CD8-positive, alpha-beta T cell (primary cell): ENCODE measurements at regions of chr3 and their contacts with region 1.

Region 1: DNA sequence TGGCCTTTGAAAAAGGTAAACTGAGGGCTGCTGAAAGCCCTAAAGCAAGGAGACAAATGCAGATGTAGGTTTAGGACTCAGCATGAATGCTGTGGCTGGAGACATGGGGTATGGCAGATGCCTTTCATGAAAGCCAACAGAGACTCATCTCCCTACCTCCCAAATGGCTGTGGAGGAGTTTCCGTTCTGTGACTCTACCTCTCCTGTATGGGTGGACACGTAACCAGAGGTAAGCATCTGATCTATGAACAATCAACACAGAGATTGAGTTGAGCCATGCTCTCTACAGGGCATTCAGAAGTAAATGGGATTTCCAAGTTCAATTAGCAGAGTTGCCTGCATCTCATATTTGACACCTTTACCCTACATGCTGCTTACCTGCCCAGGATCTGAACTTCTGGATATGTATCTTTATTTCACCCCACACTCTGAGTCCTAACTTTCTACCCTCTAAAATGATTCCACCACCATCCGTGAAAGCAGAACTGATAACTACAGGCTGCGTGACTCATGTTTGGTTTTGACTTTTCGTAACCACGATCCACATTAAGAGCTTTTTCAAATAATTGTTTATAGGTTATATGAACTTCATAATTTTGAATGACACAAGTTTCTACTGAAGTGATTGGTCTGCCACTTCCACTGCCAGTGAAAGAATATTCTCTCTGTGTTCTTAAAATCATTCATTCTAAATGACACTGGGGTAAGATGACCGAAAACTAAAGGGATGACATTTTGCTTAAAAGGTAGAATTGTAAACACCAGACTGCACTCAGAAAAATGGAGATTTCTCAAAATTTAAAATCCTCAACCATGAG is 1058.7 kb downstream of the FHIT start:
- DNase-seq: no peak
- ATAC-seq: no peak
- H3K4me3 ChIP-seq: no peak overlapping the region
- H3K4me3 Mint-ChIP-seq: no peak overlapping the region
- H3K27ac ChIP-seq: no peak overlapping the region
- H3K27ac Mint-ChIP-seq: no peak overlapping the region
- H3K4me1 ChIP-seq: no peaks in the 10 kb centered on the region
- H3K4me1 Mint-ChIP-seq: peaks cover 9% of the 10 kb centered on the region
- H3K27me3 ChIP-seq: no peaks in the 10 kb centered on the region
- H3K27me3 Mint-ChIP-seq: no peaks in the 10 kb centered on the region
- CTCF ChIP-seq: no peak

Region 2: GRCh38 chr3:60114191-60114590 is 78.3 kb before region 1 on chr3:
- CTCF ChIA-PET with region 1: no interaction called
- POLR2A ChIA-PET with region 1: no interaction called
- intact Hi-C with region 1: loop called in 1 of 2 experiments (anchors 10 kb)
- DNase-seq: no peak
- ATAC-seq: no peak
- H3K4me3 ChIP-seq: no peak overlapping the region
- H3K4me3 Mint-ChIP-seq: no peak overlapping the region
- H3K27ac ChIP-seq: no peak overlapping the region
- H3K27ac Mint-ChIP-seq: no peak overlapping the region
- H3K4me1 ChIP-seq: no peaks in the 10 kb centered on the region
- H3K4me1 Mint-ChIP-seq: no peaks in the 10 kb centered on the region
- H3K27me3 ChIP-seq: no peaks in the 10 kb centered on the region
- H3K27me3 Mint-ChIP-seq: no peaks in the 10 kb centered on the region
- CTCF ChIP-seq: no peak